Activated CD8-positive, alpha-beta T cell treated with anti-CD3 and anti-CD28 coated beads, Interleukin-2, amount 10 ng/mL, durations not matched to agents 7 days and 5 days (primary cell): ENCODE measurements at regions of chr9 and their contacts with region 1.

Region 1: GRCh38 chr9:97900738-97901565 is 21.3 kb downstream of the TRMO start:
- DNase-seq: peak; percentile 46
- ATAC-seq: no peak
- H3K4me3 Mint-ChIP-seq: no peak overlapping the region
- H3K27ac Mint-ChIP-seq: no peak overlapping the region
- H3K4me1 Mint-ChIP-seq: peaks cover 43% of the 10 kb centered on the region
- H3K27me3 Mint-ChIP-seq: no peaks in the 10 kb centered on the region

Region 2: DNA sequence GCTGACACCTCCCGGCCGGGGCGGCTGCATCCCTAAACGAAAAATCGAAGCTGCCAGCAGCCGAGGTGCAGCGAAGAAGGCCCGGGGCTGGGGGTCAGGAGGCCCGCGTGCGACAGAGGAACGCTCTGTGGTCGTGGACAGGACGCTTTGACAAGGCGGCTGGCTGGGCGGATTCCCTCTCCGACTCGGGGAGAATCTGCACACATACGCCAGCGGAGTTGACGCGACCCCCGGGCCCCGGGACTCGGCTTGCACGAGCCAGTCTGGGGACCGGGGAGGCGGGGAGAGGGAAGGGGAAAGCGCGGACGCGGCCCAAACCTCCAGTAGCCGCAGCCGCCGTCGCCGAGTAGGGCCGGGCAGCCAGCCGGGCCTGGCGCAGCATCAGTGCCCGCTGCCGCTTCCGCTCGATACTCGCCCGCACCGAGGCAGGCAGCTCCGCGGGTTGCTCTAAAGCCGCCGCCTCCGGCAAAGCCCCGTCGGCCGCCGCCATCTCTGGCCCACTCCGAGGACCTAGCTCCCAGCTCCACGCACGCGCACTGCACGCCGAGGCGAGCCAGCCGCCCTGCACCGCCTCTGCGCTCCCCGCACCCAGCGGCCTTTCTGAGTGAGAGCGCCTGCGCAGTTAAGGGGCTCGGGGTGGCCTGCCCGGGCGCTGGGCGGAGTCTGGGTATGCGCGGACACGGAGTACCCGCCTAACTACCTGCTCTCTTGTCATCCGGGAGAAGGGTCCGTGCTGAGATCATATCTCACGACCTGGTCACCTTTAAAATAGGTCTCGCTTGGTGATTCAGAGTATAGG is 203.9 kb before region 1 on chr9 and contains the start of gene XPA:
- CTCF ChIA-PET with region 1: interaction called, 14 read pairs
- POLR2A ChIA-PET with region 1: no interaction called
- DNase-seq: peak; percentile 97
- ATAC-seq: peak; percentile 98
- H3K4me3 Mint-ChIP-seq: peak within 1 kb of the TSS; percentile 81
- H3K27ac Mint-ChIP-seq: peak within 1 kb of the TSS; percentile 88
- H3K4me1 Mint-ChIP-seq: peaks cover 55% of the 10 kb centered on the region
- H3K27me3 Mint-ChIP-seq: peaks cover 9% of the 10 kb centered on the region
- total RNA-seq, gene XPA: 10.2 TPM

Region 3: DNA sequence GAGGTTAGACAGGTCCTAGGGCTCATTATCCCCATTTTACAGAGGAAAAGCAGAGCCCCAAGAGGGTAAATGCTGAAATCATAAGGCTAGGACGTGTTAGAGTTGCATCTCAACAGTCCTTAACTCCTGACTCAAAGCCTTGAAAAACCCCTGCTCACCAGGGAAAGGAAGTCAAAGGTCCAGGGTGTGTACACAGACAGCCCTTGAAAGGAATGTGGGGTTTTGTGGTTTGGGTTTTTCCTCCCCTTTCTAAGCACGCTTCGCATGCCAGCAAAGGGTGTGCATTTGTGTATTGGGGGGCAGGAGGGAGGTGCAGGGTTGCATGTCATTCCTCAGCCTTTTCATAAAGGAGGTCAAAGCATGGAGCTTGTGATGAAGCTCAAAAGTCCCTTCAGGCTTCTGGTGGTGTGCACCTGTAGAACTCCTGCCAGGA is 186.5 kb before region 1 on chr9:
- CTCF ChIA-PET with region 1: interaction called, 10 read pairs
- POLR2A ChIA-PET with region 1: no interaction called
- DNase-seq: no peak
- ATAC-seq: peak; percentile 32
- H3K4me3 Mint-ChIP-seq: peak overlapping the region; percentile 8
- H3K27ac Mint-ChIP-seq: no peak overlapping the region
- H3K4me1 Mint-ChIP-seq: peaks cover 29% of the 10 kb centered on the region
- H3K27me3 Mint-ChIP-seq: peaks cover 25% of the 10 kb centered on the region

Region 4: DNA sequence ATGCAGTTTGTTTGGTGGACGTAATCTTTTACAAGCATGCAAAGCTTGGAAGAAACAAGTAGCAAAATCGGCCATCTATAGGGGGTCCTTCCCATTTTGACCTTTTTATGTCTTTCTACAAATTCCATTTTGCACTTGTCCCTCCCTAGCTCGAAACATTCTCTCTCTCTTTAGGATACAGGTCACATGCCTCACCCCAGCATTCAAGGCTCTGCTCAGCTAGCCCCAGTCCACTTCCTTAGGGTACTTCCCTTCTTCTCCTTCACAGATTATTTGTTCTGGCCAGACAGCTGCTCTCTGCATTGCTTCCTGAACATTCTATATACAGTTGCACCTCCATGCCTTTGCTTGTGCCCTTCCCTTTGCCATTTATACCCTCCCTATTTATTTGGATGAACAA is 249.8 kb after region 1 on chr9:
- CTCF ChIA-PET with region 1: no interaction called
- POLR2A ChIA-PET with region 1: no interaction called
- DNase-seq: no peak
- ATAC-seq: no peak
- H3K4me3 Mint-ChIP-seq: no peak overlapping the region
- H3K27ac Mint-ChIP-seq: no peak overlapping the region
- H3K4me1 Mint-ChIP-seq: peaks cover 3% of the 10 kb centered on the region
- H3K27me3 Mint-ChIP-seq: no peaks in the 10 kb centered on the region